Calu3 (cell line): ENCODE measurements at regions of chr2 and their contacts with region 1.

Region 1: GRCh38 chr2:231674587-231675338 is 33.6 kb upstream of the PTMA start:
- DNase-seq: peak; percentile 87
- H3K4me3 Mint-ChIP-seq: no peak overlapping the region
- H3K27ac Mint-ChIP-seq: peak overlapping the region; percentile 88
- H3K4me1 Mint-ChIP-seq: peaks cover 38% of the 10 kb centered on the region
- H3K27me3 Mint-ChIP-seq: no peaks in the 10 kb centered on the region
- CTCF ChIP-seq: peak; percentile 81

Region 2: DNA sequence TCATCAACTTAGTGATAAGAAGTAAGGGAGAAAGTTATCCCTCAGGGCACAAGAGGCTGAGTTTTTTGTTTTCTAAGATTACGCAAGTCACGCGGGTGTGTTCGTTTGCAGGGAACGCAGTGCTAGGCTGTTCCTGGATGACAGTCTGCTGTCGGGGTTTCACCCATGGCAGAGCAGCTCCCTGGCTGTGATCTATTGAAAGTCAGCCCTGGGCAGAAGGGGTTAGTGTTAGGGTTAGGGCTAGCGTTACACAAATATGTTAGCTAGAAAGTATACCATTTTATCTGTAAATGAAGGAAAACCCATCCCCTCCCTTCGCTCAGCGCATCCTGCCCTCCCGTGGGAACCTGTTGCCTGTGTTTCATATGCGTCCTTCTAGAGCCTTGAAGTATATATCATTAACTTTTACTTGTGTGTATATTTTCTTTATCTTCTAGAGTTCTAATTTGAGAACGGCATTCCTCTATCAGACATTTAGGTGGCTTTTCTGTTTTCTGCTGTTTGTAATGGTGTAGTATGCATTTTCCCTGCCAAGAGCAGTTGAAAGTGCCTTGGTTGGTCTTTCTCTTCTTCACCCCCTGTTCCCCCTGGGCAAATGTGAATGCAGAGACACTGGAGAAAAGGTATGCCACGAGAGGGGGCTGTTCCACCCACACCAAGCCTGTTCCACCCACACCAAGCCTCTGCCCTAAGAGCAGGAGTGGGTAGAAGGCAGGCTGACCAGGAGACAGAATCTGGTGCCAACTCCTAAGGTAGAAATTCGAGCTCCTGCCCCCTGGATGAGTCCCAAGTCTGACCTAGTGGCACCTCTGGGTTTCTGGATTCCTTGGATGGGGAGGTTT is 429.3 kb before region 1 on chr2:
- CTCF ChIA-PET with region 1: no interaction called
- intact Hi-C with region 1: no loop called
- DNase-seq: peak; percentile 15
- H3K4me3 Mint-ChIP-seq: no peak overlapping the region
- H3K27ac Mint-ChIP-seq: no peak overlapping the region
- H3K4me1 Mint-ChIP-seq: peaks cover 8% of the 10 kb centered on the region
- H3K27me3 Mint-ChIP-seq: no peaks in the 10 kb centered on the region
- CTCF ChIP-seq: no peak

Region 3: DNA sequence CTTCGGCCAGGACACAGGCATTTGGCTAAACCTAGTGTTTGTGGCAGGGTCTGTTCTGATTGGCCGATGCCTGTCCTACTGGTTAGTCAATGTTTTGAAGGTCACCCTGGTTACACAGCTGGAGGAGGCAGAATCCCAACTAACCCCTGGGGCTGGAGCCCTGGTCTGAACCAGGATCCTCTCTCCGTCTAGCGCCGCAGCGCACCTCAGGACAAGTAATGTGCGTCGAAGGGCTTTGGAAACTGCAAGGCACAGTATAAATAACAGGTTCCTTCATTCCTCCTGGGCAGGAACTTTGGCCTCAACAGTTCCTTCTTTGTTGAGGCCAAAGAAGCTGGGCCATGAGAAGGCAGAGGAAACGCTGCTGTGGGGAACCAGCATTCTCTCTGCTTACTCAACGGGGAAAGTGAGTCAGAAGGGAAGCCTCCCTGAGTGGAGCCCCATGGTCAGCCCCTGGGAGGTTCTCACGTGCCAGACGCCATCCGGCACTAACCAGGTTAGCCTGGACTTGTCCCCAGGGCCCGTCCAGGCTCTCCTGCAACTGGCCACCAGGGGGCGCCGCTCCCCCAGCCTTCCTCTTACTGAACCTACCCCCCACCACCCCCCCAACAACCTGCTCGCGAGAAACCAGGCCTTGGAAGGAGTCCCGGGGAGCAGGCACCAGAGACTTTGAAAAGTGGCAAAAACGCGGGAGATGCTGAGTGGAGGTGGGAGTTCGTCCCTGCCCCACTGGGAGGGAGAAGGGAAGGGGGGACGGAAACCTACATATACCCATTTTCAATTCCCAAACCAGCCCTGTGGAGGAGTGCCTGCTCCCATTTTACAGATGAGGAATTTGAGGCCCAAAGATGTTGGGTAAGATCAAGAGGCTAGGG is 62.3 kb before region 1 on chr2:
- CTCF ChIA-PET with region 1: interaction called, 29 read pairs
- intact Hi-C with region 1: loop called (anchors 2 kb)
- DNase-seq: peak; percentile 95
- H3K4me3 Mint-ChIP-seq: peak overlapping the region; percentile 21
- H3K27ac Mint-ChIP-seq: peak overlapping the region; percentile 36
- H3K4me1 Mint-ChIP-seq: peaks cover 61% of the 10 kb centered on the region
- H3K27me3 Mint-ChIP-seq: no peaks in the 10 kb centered on the region
- CTCF ChIP-seq: peak; percentile 95

Region 4: DNA sequence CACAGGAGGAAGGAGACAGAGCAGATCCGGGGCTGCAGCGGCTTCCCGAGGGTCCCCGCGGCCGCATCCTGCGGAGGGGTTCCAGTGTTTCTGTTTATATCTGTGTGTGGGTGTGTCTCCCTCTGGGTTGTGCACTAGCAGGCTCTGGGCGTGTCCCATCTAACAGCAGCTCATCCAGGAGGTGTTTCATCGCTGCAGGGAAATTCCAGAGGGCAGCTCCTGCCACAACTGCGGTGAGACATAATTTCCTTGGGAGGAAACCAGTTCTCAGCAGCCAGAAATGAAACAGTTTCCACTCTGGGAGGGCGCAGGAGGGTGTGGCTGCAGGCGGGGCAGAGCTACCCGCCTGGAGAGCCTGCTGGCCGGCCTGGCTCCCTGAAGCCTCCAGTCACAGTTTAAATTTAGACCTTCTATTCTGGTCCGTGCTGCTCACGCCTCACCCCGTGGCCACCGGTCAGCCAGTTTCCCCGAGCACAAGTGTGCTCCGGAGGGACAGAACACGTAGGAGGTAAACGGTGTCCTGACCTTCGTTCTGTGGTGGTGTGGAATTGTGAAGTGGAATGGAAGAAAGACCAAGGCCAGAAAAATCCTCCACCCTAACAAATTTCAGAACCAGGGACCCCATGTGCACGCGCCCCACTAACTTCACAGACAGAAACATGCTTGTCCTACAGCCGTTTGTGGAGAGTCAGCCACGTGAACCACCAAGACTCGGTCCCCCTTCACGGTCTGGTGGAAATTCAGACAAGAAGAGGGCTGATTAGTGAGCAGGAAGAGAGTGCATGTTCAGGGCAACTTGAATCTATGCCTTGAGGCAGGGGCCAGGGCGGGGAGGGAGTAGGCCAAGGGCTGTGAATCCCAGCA is 31.9 kb before region 1 on chr2:
- CTCF ChIA-PET with region 1: interaction called, 20 read pairs
- intact Hi-C with region 1: loop called (anchors 1 kb)
- DNase-seq: peak; percentile 92
- H3K4me3 Mint-ChIP-seq: peak overlapping the region; percentile 72
- H3K27ac Mint-ChIP-seq: peak overlapping the region; percentile 100
- H3K4me1 Mint-ChIP-seq: peaks cover 34% of the 10 kb centered on the region
- H3K27me3 Mint-ChIP-seq: no peaks in the 10 kb centered on the region
- CTCF ChIP-seq: no peak

Region 5: GRCh38 chr2:231648587-231649174 is 26.1 kb before region 1 on chr2:
- CTCF ChIA-PET with region 1: interaction called, 13 read pairs
- intact Hi-C with region 1: loop called (anchors 1 kb)
- DNase-seq: peak; percentile 93
- H3K4me3 Mint-ChIP-seq: no peak overlapping the region
- H3K27ac Mint-ChIP-seq: no peak overlapping the region
- H3K4me1 Mint-ChIP-seq: peaks cover 16% of the 10 kb centered on the region
- H3K27me3 Mint-ChIP-seq: no peaks in the 10 kb centered on the region
- CTCF ChIP-seq: peak; percentile 80